ENCODE measurements at regions of chr12 and their contacts with region 1.

Region 1: DNA sequence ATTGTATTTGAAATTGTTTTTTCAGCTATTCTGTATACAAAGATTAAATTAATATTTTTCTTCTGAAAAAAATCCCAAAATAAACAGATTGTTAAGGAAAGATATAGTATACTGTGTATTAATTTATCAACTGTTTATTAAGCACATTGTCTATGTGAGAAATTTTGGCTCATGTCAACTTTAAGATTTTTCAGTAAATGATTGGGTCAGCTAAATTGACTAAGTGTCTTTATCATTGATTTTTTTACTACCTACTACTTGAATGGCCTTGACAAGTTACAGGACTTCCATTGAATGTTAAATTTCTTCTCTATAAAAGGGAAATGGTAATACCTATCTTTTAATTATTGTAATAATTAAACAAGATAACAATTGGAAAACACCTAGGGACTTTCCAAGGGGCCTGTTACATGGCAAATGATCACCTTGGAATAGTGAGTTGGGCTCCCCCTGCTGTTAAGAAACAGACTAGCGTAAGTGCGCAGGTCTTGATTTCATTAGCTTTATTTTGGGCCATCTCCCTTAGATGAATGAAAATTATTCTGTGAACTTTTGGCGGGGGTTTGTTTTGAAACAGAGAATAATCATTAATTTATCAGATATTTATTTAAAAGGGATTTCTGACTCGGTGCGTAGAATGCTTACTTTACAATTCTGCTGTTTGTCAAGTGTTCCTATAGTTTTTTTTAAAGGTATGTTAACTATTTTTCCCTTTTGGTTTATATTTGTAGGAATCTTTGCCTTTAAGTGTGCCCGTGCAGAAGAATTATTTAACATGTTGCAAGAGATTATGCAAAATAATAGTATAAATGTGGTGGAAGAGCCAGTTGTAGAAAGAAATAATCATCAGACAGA is 14.5 kb upstream of the CCT2 start:
- DNase-seq: no peak
- ATAC-seq: peak; percentile 68

Region 2: DNA sequence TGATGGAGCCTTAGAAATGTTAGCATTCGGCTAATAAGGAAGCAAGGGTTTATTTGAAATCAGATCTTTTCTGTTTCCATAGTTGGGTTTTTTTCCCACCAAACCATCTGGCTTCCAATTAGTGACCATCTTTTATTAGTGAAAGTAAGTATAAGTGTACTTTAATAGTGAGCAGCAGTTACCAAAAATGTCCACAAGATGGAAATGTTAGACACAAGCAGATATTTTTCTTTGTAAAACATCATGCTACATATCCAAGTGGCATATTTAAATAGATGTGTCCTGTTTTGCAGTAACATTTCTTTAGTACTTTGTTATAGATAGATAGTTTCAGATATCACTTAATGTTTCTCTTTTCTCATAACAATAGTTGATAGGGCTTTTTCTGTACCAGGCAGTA is 182.4 kb before region 1 on chr12:
- intact Hi-C with region 1: loop called (anchors 10 kb)
- DNase-seq: no peak
- ATAC-seq: no peak

Region 3: DNA sequence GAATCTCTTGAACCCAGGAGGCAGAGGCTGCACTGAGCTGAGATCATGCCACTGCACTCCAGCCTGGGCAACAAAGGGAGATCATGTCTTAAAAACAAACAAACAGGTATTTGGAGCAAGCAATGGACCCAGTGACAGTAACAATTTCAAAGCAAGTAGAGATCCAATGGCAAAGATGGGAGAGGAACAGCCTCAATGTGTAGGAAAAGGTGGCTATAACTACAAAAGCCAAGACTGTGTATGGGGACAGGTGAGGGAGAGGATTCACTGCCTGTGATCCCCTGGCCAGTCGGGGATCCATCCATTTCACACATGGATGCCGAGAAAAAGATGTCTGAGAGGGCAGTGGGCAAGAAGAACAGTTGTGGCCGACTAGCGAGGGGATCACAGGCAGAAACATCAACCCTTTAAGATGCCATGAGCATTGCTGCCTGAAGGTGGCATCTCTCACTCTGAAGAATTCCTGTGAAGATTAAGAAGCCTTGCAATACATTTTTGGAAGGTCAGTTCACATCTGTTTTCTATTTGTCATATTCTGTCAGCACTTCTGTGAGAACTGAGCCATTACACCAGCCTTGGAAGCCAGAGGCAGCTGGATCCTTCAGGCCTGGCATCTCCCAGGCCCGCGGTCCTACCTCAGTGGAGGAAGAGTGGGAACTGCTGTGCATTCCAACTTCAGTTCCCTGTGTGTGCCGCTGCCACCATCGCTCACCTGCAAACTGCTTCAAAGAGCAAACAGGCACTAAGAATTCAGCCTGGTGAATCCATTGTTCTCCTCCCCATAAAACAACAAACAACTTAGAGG is 155.1 kb before region 1 on chr12:
- intact Hi-C with region 1: loop called (anchors 1 kb)
- DNase-seq: no peak
- ATAC-seq: peak; percentile 95

Region 4: GRCh38 chr12:69470189-69471075 is 100.3 kb before region 1 on chr12 and contains the start of gene FRS2:
- intact Hi-C with region 1: loop called (anchors 2 kb)
- DNase-seq: peak; percentile 93
- ATAC-seq: peak; percentile 98
- total RNA-seq, gene FRS2: 19.0 TPM